WTC11 (cell line): ENCODE measurements at regions of chr6 and their contacts with region 1.

Region 1: DNA sequence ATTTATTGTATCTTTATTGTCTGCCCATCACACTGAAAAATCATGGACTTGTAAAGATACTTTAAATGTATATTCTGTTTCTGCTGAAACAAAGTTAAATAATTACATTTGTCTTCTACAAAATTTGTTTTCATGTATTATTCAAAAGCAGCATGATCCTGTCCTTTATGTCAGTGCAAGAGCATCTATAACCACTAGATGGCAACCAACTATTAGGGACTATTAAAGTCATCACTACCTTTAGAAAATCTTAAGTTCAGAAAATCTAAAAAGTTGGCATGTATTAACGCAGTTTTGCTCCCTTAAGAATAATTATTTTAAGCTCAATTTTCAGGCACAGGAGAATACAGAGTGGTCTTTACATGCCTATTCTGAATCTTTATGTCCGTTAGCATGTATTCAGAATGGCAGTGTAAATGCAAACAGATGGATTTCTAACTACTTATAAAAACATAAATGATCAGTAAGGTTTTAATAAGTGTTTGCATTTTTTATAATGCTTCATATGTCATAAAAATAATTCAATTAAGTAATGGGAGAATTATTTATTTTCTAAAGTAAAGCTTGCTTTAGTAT is 17.8 kb downstream of the TMEM30A start:
- DNase-seq: no peak
- ATAC-seq: peak; percentile 19; the same call in 1 of the 2 replicates
- H3K4me3 Mint-ChIP-seq: no peak overlapping the region
- H3K27ac Mint-ChIP-seq: no peak overlapping the region
- H3K4me1 Mint-ChIP-seq: peaks cover 46% of the 10 kb centered on the region
- H3K27me3 Mint-ChIP-seq: no peaks in the 10 kb centered on the region
- CTCF ChIP-seq: peak; percentile 56

Region 2: DNA sequence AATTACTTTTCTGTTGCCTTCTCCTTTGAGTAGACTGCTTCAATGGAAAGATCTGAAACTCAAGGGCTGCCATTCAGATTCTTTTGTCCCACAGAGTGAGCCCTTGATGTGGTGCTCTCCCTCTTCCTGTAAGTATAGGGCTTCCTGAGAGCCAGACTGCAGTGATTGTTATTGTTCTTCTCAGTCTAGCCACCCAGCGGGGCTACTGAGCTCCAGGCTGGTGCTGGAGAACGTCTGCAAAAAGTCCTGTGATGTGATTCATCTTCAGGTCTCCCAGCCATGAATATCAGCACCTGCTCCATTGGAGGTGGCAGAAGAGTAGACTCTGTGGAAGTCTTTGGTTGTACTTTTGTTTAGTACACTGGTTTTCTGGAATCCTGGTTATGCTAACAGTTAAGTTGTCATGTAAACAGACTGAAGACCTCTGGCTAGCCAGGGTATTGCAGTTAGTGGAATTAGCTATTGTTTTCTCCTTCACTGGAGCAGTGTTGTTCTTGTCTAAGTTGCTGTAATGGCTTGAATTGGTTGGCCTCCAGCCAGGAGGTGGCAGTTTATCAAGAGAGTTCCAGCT is 301.8 kb before region 1 on chr6:
- CTCF ChIA-PET with region 1: no interaction called
- POLR2A ChIA-PET with region 1: no interaction called
- DNase-seq: no peak
- ATAC-seq: peak; percentile 73
- H3K4me3 Mint-ChIP-seq: no peak overlapping the region
- H3K27ac Mint-ChIP-seq: no peak overlapping the region
- H3K4me1 Mint-ChIP-seq: peaks cover 13% of the 10 kb centered on the region
- H3K27me3 Mint-ChIP-seq: peaks cover 2% of the 10 kb centered on the region; the same call in 1 of the 2 replicates
- CTCF ChIP-seq: no peak

Region 3: DNA sequence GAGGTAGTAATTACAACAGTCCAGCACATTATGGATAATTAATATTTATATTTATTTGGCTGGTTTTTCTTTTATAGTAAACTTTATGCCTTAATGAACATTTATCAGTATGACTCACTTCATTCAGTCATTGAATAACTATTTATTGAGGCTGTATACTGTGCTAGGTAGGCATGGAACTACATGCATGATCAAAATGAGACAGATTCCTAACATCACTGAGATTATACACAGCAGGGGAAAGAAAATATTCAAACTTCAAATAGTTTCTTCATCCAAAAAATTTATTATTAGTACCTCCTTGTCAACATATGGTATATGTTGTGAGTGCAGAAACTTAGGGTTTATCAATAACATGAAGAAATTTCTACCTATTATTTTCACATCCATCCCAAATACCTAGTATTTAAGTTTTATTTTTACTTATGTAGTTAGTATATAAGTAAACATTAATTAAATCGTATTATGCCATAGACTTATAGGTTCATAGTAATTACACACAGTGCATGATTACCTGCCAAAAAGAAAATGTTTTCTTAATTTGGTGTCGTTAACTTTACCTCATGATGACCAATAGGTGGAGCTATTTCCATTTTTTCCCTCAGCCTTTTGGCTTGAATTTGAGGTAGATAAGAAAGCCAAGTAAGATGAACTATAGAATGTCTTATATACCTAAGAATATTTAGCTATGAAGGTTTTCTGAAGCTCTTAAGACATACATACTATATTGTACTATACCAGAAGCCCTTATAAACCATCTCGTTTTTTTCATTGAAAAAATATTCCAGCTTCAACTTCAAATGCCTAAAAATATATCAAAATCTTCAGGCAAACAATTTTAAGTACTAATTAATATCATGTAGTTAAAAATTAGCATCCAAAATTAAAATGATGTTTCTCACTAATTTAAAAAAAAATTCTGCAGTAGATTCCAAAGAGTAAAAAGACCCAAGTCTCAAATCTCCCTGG is 30.3 kb after region 1 on chr6:
- CTCF ChIA-PET with region 1: interaction called, 10 read pairs
- POLR2A ChIA-PET with region 1: no interaction called
- DNase-seq: no peak
- ATAC-seq: no peak
- H3K4me3 Mint-ChIP-seq: no peak overlapping the region
- H3K27ac Mint-ChIP-seq: no peak overlapping the region
- H3K4me1 Mint-ChIP-seq: peaks cover 12% of the 10 kb centered on the region
- H3K27me3 Mint-ChIP-seq: no peaks in the 10 kb centered on the region
- CTCF ChIP-seq: peak; percentile 54

Region 4: DNA sequence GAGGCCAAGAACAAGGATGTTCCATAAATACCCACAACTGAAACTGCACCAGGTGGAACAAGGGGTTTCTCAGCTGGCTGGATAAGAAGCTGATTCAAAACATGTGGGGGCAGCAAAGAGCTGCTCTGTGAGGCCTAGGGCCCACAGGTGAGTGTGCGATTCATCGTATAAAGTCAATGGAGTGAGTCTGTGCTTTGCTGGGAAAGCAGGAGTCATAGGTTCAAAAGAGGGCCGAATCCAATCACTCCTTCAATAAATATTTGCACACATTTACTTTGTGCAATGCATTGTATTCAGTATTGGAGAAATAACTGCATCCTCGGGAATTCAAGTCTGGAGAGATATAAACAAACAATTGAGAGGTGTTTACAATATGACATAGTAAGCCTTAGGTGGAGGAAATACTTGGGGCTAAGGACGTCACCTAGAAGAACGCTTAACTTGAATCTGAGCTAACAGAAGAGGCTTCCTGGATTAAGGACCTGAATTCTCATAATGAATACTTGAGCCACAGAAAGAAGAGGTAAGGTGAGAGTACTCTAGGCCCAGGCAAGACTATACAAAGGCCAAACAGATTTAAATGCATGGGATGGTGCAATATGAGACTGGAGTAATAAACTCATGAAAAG is 101.5 kb after region 1 on chr6:
- CTCF ChIA-PET with region 1: interaction called, 16 read pairs
- POLR2A ChIA-PET with region 1: no interaction called
- DNase-seq: peak; percentile 68
- ATAC-seq: peak; percentile 99
- H3K4me3 Mint-ChIP-seq: no peak overlapping the region
- H3K27ac Mint-ChIP-seq: peak overlapping the region; percentile 63; the same call in 1 of the 2 replicates
- H3K4me1 Mint-ChIP-seq: peaks cover 9% of the 10 kb centered on the region
- H3K27me3 Mint-ChIP-seq: no peaks in the 10 kb centered on the region
- CTCF ChIP-seq: peak; percentile 44; the same call in 1 of the 2 replicates

Region 5: GRCh38 chr6:75546381-75546780 is 279.6 kb after region 1 on chr6:
- CTCF ChIA-PET with region 1: interaction called, 10 read pairs
- POLR2A ChIA-PET with region 1: no interaction called
- DNase-seq: no peak
- ATAC-seq: no peak
- H3K4me3 Mint-ChIP-seq: no peak overlapping the region
- H3K27ac Mint-ChIP-seq: no peak overlapping the region
- H3K4me1 Mint-ChIP-seq: peaks cover 5% of the 10 kb centered on the region
- H3K27me3 Mint-ChIP-seq: no peaks in the 10 kb centered on the region
- CTCF ChIP-seq: no peak

Region 6: DNA sequence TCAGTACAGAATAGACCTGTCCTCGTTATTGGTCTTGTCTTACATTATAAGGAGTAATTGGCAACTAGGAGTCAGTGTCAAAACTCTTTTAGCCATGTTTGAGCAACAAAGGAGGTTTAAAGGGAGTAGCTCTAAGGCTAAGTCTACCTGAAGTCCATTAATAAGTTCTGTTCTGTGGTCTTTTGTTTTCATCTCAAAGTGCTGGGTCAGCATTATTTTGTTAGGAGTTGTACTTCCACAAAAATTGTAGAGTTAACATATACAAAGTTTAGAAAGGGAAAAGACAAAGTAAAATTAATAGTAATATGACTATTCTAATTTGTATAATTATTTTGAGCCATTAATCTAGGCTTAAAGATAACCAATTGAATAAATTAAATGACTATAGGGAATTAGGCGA is 322.1 kb after region 1 on chr6:
- CTCF ChIA-PET with region 1: no interaction called
- POLR2A ChIA-PET with region 1: interaction called, 10 read pairs
- DNase-seq: no peak
- ATAC-seq: no peak
- H3K4me3 Mint-ChIP-seq: no peak overlapping the region
- H3K27ac Mint-ChIP-seq: no peak overlapping the region
- H3K4me1 Mint-ChIP-seq: no peaks in the 10 kb centered on the region
- H3K27me3 Mint-ChIP-seq: no peaks in the 10 kb centered on the region; the same call in 1 of the 2 replicates
- CTCF ChIP-seq: no peak